GM12878 (cell line): ENCODE measurements at regions of chr1 and their contacts with region 1.

Region 1: DNA sequence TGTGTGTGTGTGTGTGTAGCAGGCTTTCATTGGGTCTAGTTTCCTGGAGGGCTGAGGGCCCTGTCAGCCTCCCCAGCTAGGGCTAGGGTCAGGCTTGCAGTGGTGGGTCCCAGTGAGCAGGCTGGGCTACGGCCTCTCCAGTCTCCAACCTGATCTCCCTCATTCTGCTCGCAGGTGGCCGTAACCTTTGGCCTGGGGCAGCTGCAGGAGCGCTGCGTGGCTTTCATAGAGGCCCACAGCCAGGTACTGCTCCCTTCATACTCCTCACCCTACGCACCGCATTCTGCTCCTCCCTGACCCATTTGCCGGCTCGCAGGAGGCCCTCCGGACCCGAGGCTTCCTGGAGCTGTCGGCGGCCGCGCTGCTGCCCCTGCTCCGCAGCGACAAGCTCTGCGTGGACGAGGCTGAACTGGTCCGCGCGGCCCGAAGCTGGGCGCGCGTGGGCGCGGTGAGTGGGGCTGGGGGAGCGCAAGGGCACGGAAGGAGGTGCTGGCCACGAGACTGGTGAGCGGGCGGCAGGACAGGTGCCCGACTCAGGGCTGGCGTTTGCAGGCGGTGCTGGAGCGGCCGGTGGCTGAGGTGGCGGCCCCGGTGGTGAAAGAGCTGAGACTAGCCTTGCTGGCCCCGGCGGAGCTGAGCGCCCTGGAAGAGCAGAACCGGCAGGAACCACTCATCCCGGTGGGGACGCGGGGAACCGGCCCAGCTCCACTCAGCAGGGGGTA is 4.7 kb downstream of the BTBD19 start:
- DNase-seq: no peak
- ATAC-seq: no peak
- H3K4me3 ChIP-seq: no peak overlapping the region
- H3K27ac ChIP-seq: peak overlapping the region; percentile 71; the same call in 1 of the 2 replicates
- H3K4me1 ChIP-seq: peaks cover 32% of the 10 kb centered on the region
- H3K27me3 ChIP-seq: no peaks in the 10 kb centered on the region
- CTCF ChIP-seq: no peak
- EP300 ChIP-seq: no peak
- POLR2A ChIP-seq: no peak
- RAD21 ChIP-seq: no peak

Region 2: DNA sequence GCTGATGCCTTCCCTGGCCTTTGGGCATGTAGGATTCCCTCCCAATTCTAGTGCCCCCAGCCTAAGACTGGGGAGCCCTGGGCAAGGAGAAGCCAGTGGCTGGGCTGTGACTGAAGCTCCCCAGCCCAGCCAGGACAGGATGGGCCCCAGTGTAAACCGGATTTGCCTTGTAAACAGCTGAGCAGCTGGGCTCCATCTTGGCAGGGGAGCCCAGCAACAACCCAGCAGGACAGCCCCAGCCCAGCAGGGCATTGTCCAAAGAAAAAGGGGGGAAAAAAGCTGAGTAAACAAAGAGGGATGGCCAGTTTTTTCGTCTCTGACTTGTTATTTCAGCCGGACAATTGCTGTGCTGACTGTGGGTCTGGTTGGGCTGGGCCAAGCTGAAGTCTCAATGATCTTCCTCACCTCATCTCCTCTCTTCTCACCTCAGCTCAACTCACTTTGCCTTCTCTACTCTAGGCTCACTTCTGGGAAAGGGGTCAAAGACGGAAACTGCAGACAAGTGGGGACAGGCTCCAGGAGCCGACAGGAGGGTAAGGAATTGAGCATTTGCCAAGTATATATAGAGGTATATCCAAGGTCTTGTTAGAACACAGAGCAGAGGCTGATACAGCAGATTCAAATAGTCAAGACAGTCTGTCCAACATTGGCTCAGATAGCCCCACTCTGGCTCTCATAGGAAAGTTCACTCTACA is 236.4 kb before region 1 on chr1:
- CTCF ChIA-PET with region 1: no interaction called
- POLR2A ChIA-PET with region 1: no interaction called
- RAD21 ChIA-PET with region 1: no interaction called
- SMC1A ChIA-PET with region 1: no interaction called
- in situ Hi-C with region 1: no loop called
- intact Hi-C with region 1: no loop called
- DNase-seq: no peak
- ATAC-seq: no peak
- H3K4me3 ChIP-seq: no peak overlapping the region
- H3K27ac ChIP-seq: no peak overlapping the region
- H3K4me1 ChIP-seq: no peaks in the 10 kb centered on the region
- H3K27me3 ChIP-seq: peaks cover 0 to 2% of the 10 kb centered on the region in 2 experiments; a peak in 2 of 4 replicates
- CTCF ChIP-seq: no peak
- EP300 ChIP-seq: no peak
- POLR2A ChIP-seq: no peak
- RAD21 ChIP-seq: no peak

Region 3: DNA sequence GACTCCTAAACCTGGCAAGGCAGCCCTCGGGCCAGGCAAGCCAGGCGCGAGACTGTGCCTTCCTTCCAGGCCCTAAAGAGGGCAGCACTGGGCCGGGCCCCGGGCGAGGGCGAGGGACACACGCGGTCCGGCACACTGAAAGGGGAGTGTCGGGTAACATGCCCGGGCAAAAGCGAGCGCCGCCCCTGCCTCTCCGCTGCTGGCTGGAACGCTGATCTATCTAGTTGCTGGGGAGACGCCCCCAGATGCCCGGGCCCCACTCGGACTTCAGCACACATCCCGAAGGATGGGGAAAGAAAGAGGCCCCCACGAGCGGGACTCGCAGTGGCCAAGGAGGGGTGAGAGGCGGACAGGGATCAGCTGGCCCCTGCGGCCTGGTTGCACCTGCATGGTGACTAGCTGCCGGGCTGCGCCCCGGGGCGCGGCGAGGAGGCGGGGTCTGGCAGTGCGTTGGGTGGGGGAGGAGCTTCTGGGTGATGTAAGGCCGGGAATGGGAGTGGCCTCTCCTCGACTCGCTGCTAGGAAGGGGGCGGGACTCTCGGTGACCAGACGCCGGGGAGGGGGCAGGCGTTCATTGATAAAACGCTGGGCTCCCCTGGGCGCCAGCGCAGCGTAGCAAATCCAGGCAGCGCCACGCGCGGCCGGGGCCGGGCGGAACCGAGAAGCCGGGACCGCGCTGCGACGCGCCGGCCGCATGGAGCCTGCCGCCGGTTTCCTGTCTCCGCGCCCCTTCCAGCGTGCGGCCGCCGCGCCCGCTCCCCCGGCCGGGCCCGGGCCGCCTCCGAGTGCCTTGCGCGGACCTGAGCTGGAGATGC is 13.0 kb before region 1 on chr1 and contains the start of gene PLK3:
- CTCF ChIA-PET with region 1: interaction called, 47 read pairs
- POLR2A ChIA-PET with region 1: interaction called, 59 read pairs
- RAD21 ChIA-PET with region 1: interaction called, 30 read pairs
- SMC1A ChIA-PET with region 1: interaction called, 14 read pairs
- in situ Hi-C with region 1: no loop called
- intact Hi-C with region 1: no loop called
- DNase-seq: peak; percentile 91
- ATAC-seq: peak; percentile 91
- H3K4me3 ChIP-seq: peak within 1 kb of the TSS; percentile 94
- H3K27ac ChIP-seq: peak within 1 kb of the TSS; percentile 84
- H3K4me1 ChIP-seq: peaks cover 11% of the 10 kb centered on the region
- H3K27me3 ChIP-seq: no peaks in the 10 kb centered on the region
- CTCF ChIP-seq: peak; percentile 92 to 97 (median 95)
- EP300 ChIP-seq: no peak
- POLR2A ChIP-seq: peak; percentile 90
- RAD21 ChIP-seq: peak; percentile 86
- polyA plus RNA-seq, gene PLK3: 1.5 to 1.9 TPM